ENCODE measurements at regions of chr15 and their contacts with region 1.

Region 1: DNA sequence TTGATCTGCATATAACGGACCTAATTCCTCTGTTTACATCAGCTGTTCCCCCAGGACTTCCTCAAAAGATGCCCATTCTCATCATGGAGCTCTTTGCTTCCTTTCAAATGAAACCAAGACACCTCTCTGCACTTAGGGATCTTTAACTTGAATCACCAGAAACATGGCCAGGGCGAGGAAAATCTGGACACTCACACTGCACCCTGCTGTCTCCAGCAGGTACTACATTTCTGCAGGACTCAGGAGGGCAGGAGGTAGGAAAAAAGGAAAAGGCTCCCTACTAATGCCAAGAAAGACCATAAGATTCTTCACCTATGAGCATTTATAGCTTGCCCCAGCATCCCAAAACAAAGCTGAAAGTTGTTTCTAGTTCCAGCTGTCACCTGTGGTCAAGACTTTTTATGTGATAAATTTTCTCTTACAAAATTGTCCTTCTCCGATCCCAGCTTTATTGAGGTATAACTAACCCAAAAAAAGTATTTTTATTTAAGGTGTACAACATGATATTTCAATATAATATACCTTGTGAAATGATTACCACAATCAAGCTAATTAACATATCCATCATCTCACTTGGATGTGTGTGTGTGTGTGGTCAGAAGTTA is 87.3 kb upstream of the C15orf61 start:
- DNase-seq: peak; percentile 16
- H3K4me3 ChIP-seq: no peak overlapping the region
- H3K27ac ChIP-seq: no peak overlapping the region
- H3K27me3 ChIP-seq: no peaks in the 10 kb centered on the region
- CTCF ChIP-seq: peak; percentile 90

Region 2: GRCh38 chr15:67165254-67166253 is 268.0 kb before region 1 on chr15:
- CTCF ChIA-PET with region 1: no interaction called
- POLR2A ChIA-PET with region 1: no interaction called
- DNase-seq: no peak
- H3K4me3 ChIP-seq: no peak overlapping the region
- H3K27ac ChIP-seq: peak overlapping the region; percentile 96
- H3K27me3 ChIP-seq: no peaks in the 10 kb centered on the region
- CTCF ChIP-seq: no peak

Region 3: GRCh38 chr15:67372543-67372942 is 61.1 kb before region 1 on chr15:
- CTCF ChIA-PET with region 1: interaction called, 10 read pairs
- POLR2A ChIA-PET with region 1: no interaction called
- DNase-seq: no peak
- H3K4me3 ChIP-seq: no peak overlapping the region
- H3K27ac ChIP-seq: no peak overlapping the region
- H3K27me3 ChIP-seq: peaks cover 6% of the 10 kb centered on the region
- CTCF ChIP-seq: no peak

Region 4: GRCh38 chr15:67413770-67414394 is 19.7 kb before region 1 on chr15:
- CTCF ChIA-PET with region 1: interaction called, 15 read pairs
- POLR2A ChIA-PET with region 1: no interaction called
- DNase-seq: peak; percentile 10
- H3K4me3 ChIP-seq: no peak overlapping the region
- H3K27ac ChIP-seq: no peak overlapping the region
- H3K27me3 ChIP-seq: no peaks in the 10 kb centered on the region
- CTCF ChIP-seq: no peak

Region 5: GRCh38 chr15:67444100-67444499 is 10.5 kb after region 1 on chr15:
- CTCF ChIA-PET with region 1: interaction called, 29 read pairs
- POLR2A ChIA-PET with region 1: no interaction called
- DNase-seq: no peak
- H3K4me3 ChIP-seq: no peak overlapping the region
- H3K27ac ChIP-seq: no peak overlapping the region
- H3K27me3 ChIP-seq: peaks cover 7% of the 10 kb centered on the region
- CTCF ChIP-seq: no peak

Region 6: GRCh38 chr15:67542420-67543347 is 109.1 kb after region 1 on chr15 and contains the start of gene MAP2K5:
- CTCF ChIA-PET with region 1: no interaction called
- POLR2A ChIA-PET with region 1: no interaction called
- DNase-seq: no peak
- H3K4me3 ChIP-seq: peak within 1 kb of the TSS; percentile 88
- H3K27ac ChIP-seq: peak within 1 kb of the TSS; percentile 74
- H3K27me3 ChIP-seq: no peaks in the 10 kb centered on the region
- CTCF ChIP-seq: no peak
- polyA plus RNA-seq, gene MAP2K5: 5.4 and 5.6 TPM in 2 replicates

Measured in AG04450 (cell line).